ENCODE measurements at regions of chr15 and their contacts with region 1.

Region 1: DNA sequence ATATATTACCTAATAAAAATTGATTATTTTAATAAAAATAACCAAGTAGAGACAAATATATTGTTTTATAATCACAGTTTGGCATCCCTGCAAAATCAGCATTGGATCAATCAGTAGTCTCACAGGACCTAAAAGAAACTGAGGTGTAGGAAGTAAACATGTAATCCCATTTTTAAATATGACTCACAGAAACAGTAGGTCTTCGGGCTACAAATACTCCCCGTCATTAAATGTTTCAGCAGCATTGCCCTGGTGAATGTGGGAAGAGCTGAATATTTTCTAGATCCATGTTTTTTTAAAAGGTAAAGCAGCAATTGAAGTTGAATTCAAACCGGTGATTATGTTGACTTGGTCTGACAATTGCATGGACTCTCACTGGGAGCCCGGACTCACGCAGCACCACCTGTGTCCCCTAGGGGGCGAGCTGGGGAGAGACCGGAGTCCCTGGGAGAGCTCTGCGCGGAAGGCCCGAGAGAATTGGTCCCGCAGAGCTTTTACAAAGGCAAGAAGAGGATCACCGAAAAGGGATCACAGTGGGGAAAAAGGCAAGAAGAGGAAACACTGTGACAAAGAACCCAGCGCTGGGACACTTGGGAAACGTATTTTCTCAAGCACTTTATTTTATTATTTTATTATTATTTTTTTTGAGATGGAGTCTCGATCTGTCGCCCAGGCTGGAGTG is 17.2 kb upstream of the USP3 start:
- DNase-seq: peak; percentile 83 to 95 (median 88)
- ATAC-seq: peak; percentile 97
- H3K4me3 ChIP-seq: no peak overlapping the region
- H3K4me3 Mint-ChIP-seq: peak overlapping the region; percentile 40
- H3K27ac ChIP-seq: no peak overlapping the region
- H3K27ac Mint-ChIP-seq: peak overlapping the region; percentile 80
- H3K4me1 ChIP-seq: peaks cover 48% of the 10 kb centered on the region
- H3K4me1 Mint-ChIP-seq: peaks cover 62% of the 10 kb centered on the region
- H3K27me3 ChIP-seq: no peaks in the 10 kb centered on the region
- H3K27me3 Mint-ChIP-seq: no peaks in the 10 kb centered on the region
- CTCF ChIP-seq: peak; percentile 98

Region 2: DNA sequence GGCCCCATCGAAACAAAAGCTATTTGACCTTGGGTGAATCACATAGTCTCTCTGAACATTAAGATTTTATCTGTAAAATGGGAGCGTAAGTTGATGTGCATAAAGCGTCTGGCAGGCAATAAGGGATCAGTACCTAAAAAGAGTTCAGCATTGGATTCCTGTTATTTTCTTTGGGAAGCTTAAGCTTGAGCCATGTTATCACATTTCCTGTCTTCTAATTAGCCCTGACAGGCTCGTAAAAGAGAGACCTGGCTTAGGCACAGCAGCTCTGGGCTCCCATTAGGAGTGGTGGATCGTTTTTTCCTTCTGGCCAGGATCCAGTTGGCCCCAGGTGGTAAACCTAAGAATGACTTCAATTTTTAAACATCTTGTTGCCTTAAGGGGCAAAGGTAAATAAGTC is 79.6 kb before region 1 on chr15:
- CTCF ChIA-PET with region 1: no interaction called
- POLR2A ChIA-PET with region 1: no interaction called
- intact Hi-C with region 1: no loop called
- DNase-seq: no peak
- ATAC-seq: no peak
- H3K4me3 ChIP-seq: no peak overlapping the region
- H3K4me3 Mint-ChIP-seq: no peak overlapping the region
- H3K27ac ChIP-seq: no peak overlapping the region
- H3K27ac Mint-ChIP-seq: no peak overlapping the region
- H3K4me1 ChIP-seq: no peaks in the 10 kb centered on the region
- H3K4me1 Mint-ChIP-seq: peaks cover 5% of the 10 kb centered on the region
- H3K27me3 ChIP-seq: no peaks in the 10 kb centered on the region
- H3K27me3 Mint-ChIP-seq: no peaks in the 10 kb centered on the region
- CTCF ChIP-seq: no peak

Region 3: DNA sequence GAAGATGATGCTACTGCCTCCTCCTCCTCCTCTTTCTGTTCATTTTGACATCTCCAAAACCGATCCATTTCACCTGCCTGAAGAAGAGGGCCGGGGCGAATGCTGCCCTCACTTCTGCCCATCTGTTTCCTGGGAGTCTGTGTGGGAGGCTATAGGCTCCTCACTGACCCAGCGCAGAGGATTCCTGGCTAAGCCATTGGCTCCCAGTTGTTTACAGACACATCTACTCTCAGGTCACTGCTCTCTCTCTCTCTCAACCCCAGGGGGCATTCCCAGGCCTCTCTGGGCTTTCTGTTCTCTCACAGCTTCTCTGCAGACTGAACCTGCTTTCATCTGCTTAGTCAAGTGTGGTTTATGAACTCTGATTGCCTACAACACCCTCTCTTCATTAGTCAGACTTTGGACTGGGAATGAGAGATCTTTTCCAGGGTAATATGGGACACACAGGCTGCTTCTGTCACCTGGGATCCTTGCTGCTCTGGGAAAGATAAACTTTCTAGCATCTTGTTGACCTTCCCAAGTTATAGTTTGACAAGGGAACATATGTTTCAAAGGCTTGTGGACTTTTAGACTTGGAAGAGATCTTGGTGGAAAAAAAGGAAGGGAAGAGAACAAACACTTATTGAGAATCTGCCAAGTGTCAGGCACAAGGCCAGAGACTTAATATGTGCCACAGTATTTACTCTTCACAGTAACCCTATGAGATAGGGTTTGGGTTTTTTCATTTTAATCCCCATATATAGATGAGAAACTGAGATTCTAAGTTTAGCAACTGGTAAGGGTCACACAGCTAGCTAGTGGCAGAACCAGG is 13.0 kb before region 1 on chr15:
- CTCF ChIA-PET with region 1: interaction called, 16 read pairs
- POLR2A ChIA-PET with region 1: interaction called, 8 read pairs
- intact Hi-C with region 1: loop called in 1 of 2 experiments (anchors 1 kb)
- DNase-seq: peak in 7 of 9 experiments; percentile 22 to 83 (median 60)
- ATAC-seq: peak; percentile 74
- H3K4me3 ChIP-seq: no peak overlapping the region
- H3K4me3 Mint-ChIP-seq: no peak overlapping the region
- H3K27ac ChIP-seq: no peak overlapping the region
- H3K27ac Mint-ChIP-seq: peak overlapping the region; percentile 94
- H3K4me1 ChIP-seq: peaks cover 43% of the 10 kb centered on the region
- H3K4me1 Mint-ChIP-seq: peaks cover 50% of the 10 kb centered on the region
- H3K27me3 ChIP-seq: no peaks in the 10 kb centered on the region
- H3K27me3 Mint-ChIP-seq: no peaks in the 10 kb centered on the region
- CTCF ChIP-seq: no peak

Region 4: GRCh38 chr15:63514531-63514943 is 27.3 kb after region 1 on chr15:
- CTCF ChIA-PET with region 1: interaction called, 21 read pairs
- POLR2A ChIA-PET with region 1: interaction called, 8 read pairs
- intact Hi-C with region 1: no loop called
- DNase-seq: peak in 1 of 9 experiments; percentile 31
- ATAC-seq: no peak
- H3K4me3 ChIP-seq: no peak overlapping the region
- H3K4me3 Mint-ChIP-seq: peak overlapping the region; percentile 26
- H3K27ac ChIP-seq: no peak overlapping the region
- H3K27ac Mint-ChIP-seq: peak overlapping the region; percentile 22
- H3K4me1 ChIP-seq: peaks cover 96% of the 10 kb centered on the region
- H3K4me1 Mint-ChIP-seq: peaks cover 90% of the 10 kb centered on the region
- H3K27me3 ChIP-seq: no peaks in the 10 kb centered on the region
- H3K27me3 Mint-ChIP-seq: no peaks in the 10 kb centered on the region
- CTCF ChIP-seq: no peak

Region 5: GRCh38 chr15:63539521-63539920 is 52.3 kb after region 1 on chr15:
- CTCF ChIA-PET with region 1: interaction called, 10 read pairs
- POLR2A ChIA-PET with region 1: interaction called, 4 read pairs
- intact Hi-C with region 1: loop called in 1 of 2 experiments (anchors 5 kb)
- DNase-seq: no peak
- ATAC-seq: no peak
- H3K4me3 ChIP-seq: no peak overlapping the region
- H3K4me3 Mint-ChIP-seq: no peak overlapping the region
- H3K27ac ChIP-seq: no peak overlapping the region
- H3K27ac Mint-ChIP-seq: no peak overlapping the region
- H3K4me1 ChIP-seq: peaks cover 27% of the 10 kb centered on the region
- H3K4me1 Mint-ChIP-seq: peaks cover 61% of the 10 kb centered on the region
- H3K27me3 ChIP-seq: no peaks in the 10 kb centered on the region
- H3K27me3 Mint-ChIP-seq: no peaks in the 10 kb centered on the region
- CTCF ChIP-seq: no peak

Region 6: GRCh38 chr15:63573533-63573932 is 86.3 kb after region 1 on chr15:
- CTCF ChIA-PET with region 1: interaction called, 13 read pairs
- POLR2A ChIA-PET with region 1: no interaction called
- intact Hi-C with region 1: no loop called
- DNase-seq: no peak
- ATAC-seq: no peak
- H3K4me3 ChIP-seq: no peak overlapping the region
- H3K4me3 Mint-ChIP-seq: no peak overlapping the region
- H3K27ac ChIP-seq: no peak overlapping the region
- H3K27ac Mint-ChIP-seq: peak overlapping the region; percentile 24
- H3K4me1 ChIP-seq: no peaks in the 10 kb centered on the region
- H3K4me1 Mint-ChIP-seq: peaks cover 9% of the 10 kb centered on the region
- H3K27me3 ChIP-seq: no peaks in the 10 kb centered on the region
- H3K27me3 Mint-ChIP-seq: no peaks in the 10 kb centered on the region
- CTCF ChIP-seq: no peak